Upper lobe of right lung (tissue), 1 donor: ENCODE measurements at regions of chr19 and their contacts with region 1.

Region 1: GRCh38 chr19:2578901-2579677 is 103.2 kb downstream of the GADD45B start:
- DNase-seq: peak; percentile 95
- ATAC-seq: peak; percentile 91
- H3K4me3 ChIP-seq: peak overlapping the region; percentile 41
- H3K27ac ChIP-seq: peak overlapping the region; percentile 83
- H3K4me1 ChIP-seq: peaks cover 29% of the 10 kb centered on the region
- H3K27me3 ChIP-seq: no peaks in the 10 kb centered on the region
- CTCF ChIP-seq: peak; percentile 91

Region 2: DNA sequence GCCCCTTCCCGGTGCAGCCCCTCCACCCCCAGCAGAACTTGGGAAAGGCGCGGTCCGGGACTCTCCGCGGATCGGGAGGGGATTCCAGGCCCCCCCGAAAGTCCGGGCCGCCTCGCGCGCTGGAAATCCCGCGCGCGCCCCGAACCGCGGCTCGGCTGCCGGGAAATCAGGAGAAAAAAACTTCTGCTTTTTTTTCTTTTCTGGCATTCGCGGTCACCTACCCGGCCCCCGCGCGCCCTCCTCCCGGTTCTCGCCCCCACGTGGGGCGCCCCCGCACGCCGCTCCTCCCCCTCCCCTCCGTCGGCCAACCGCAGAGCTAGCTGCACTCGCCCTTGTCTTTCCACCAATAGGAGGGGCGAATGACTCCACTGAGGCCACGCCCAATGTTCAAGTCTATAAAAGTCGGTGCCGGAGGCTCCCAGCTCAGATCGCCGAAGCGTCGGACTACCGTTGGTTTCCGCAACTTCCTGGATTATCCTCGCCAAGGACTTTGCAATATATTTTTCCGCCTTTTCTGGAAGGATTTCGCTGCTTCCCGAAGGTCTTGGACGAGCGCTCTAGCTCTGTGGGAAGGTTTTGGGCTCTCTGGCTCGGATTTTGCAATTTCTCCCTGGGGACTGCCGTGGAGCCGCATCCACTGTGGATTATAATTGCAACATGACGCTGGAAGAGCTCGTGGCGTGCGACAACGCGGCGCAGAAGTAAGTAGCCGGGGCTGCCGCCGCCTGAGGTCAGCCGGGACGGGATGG is 103.2 kb before region 1 on chr19 and contains the start of gene GADD45B:
- intact Hi-C with region 1: loop called (anchors 10 kb)
- DNase-seq: peak; percentile 99
- ATAC-seq: peak; percentile 86
- H3K4me3 ChIP-seq: peak within 1 kb of the TSS; percentile 93
- H3K27ac ChIP-seq: peak within 1 kb of the TSS; percentile 91
- H3K4me1 ChIP-seq: peaks cover 24% of the 10 kb centered on the region
- H3K27me3 ChIP-seq: no peaks in the 10 kb centered on the region
- CTCF ChIP-seq: no peak
- total RNA-seq, gene GADD45B: 91.2 TPM

Region 3: GRCh38 chr19:2543463-2544442 is 35.3 kb before region 1 on chr19:
- intact Hi-C with region 1: loop called (anchors 5 kb)
- DNase-seq: peak; percentile 93
- ATAC-seq: peak; percentile 82
- H3K4me3 ChIP-seq: peak overlapping the region; percentile 29
- H3K27ac ChIP-seq: peak overlapping the region; percentile 95
- H3K4me1 ChIP-seq: peaks cover 74% of the 10 kb centered on the region
- H3K27me3 ChIP-seq: no peaks in the 10 kb centered on the region
- CTCF ChIP-seq: peak; percentile 32

Region 4: DNA sequence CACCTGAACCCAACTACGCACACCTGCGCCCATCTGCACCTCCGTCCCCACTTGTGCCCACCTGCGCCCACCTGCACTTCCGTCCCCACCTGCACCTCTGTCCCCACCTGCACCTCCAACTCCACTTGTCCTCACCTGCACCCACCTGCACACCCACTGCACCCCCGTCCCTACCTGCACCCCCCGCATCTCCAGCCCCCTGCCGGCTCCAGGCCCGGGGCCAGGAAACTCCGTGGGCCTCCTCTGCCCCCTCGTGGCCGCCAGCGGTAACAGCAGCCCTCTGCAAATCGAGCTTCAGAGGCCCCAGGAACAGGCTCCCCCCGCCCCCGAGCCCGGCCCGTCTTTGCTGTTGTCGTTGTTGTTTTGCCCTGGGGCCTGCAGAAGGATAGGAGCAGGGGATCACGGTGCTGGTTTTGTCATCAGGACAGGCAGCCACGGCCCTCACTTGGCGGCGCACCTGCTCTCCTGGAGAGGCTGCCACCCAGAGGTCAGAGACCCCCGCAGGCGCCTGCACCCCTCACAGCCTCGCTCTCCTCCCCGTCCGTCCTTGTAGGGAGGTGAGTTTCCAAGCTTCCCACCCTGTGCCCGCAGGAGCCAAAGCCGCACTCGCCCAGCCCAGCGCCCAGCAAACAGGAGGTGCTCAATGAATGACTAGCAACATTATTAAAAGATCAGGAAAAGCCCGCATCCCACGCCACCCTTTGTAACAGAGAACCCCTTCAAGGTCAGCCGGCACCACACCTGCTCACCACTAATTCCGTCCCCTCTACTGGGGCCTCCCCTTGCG is 58.0 kb after region 1 on chr19:
- intact Hi-C with region 1: no loop called
- DNase-seq: peak; percentile 89
- ATAC-seq: peak; percentile 78
- H3K4me3 ChIP-seq: no peak overlapping the region
- H3K27ac ChIP-seq: no peak overlapping the region
- H3K4me1 ChIP-seq: peaks cover 24% of the 10 kb centered on the region
- H3K27me3 ChIP-seq: no peaks in the 10 kb centered on the region
- CTCF ChIP-seq: peak; percentile 77